Tibial artery (tissue), 4 donors: ENCODE measurements at regions of chr13 and their contacts with region 1.

Region 1: DNA sequence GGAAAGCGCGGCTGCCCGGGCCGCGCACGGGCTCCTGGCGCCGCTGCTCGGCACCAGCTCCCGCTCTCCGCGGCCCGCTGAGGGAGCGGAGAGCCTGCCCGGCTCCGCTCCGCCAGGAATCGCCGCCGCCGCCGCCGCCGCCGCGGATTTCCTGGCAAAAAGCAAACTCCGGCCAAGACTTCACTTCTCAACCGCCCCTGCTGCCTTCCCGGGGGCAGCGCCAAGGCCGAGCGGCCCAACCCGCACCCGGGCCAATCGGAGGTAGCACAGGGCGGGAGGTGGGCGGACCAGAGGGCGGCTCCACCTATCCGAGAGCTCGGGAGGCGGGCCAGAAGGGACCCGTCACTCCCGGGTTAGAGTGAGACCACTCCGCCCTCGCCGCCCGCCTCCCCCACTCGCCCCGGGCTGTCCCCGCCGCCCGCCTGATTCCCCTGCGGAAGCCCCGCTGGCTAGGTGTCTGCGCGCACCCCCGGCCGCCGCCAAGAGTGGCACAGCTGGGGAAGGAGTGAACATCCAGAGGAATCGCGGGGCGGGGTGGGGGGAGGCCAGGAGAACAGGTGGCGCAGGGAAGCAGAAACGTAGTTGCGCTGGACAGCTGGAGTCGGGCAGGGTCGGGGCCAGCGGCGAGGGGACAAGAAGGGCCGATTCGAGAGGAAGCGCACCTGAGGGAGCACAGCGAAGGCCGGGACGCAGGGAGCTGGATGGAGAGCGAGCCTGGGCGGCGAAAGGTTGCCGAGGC is at the start of gene LNX2:
- DNase-seq: peak; percentile 98 to 99
- H3K4me3 ChIP-seq: peak within 1 kb of the TSS; percentile 87 to 95
- H3K27ac ChIP-seq: peak within 1 kb of the TSS; percentile 95 to 97
- H3K4me1 ChIP-seq: peaks cover 0 to 37% (median 21%) of the 10 kb centered on the region in 4 donors
- H3K27me3 ChIP-seq: no peaks in the 10 kb centered on the region
- CTCF ChIP-seq: no peak

Region 2: GRCh38 chr13:27171827-27172494 is 448.6 kb before region 1 on chr13:
- intact Hi-C with region 1: loop called (anchors 5 kb)
- DNase-seq: peak; percentile 89 to 96
- H3K4me3 ChIP-seq: peak overlapping the region; percentile 67 to 72
- H3K27ac ChIP-seq: peak overlapping the region; percentile 86 to 90
- H3K4me1 ChIP-seq: peaks cover 0 to 33% (median 23%) of the 10 kb centered on the region in 4 donors
- H3K27me3 ChIP-seq: no peaks in the 10 kb centered on the region
- CTCF ChIP-seq: no peak

Region 3: GRCh38 chr13:27242706-27243105 is 377.8 kb before region 1 on chr13:
- intact Hi-C with region 1: loop called (anchors 10 kb)
- DNase-seq: no peak
- H3K4me3 ChIP-seq: no peak overlapping the region
- H3K27ac ChIP-seq: no peak overlapping the region
- H3K4me1 ChIP-seq: no peaks in the 10 kb centered on the region
- H3K27me3 ChIP-seq: no peaks in the 10 kb centered on the region
- CTCF ChIP-seq: no peak

Region 4: DNA sequence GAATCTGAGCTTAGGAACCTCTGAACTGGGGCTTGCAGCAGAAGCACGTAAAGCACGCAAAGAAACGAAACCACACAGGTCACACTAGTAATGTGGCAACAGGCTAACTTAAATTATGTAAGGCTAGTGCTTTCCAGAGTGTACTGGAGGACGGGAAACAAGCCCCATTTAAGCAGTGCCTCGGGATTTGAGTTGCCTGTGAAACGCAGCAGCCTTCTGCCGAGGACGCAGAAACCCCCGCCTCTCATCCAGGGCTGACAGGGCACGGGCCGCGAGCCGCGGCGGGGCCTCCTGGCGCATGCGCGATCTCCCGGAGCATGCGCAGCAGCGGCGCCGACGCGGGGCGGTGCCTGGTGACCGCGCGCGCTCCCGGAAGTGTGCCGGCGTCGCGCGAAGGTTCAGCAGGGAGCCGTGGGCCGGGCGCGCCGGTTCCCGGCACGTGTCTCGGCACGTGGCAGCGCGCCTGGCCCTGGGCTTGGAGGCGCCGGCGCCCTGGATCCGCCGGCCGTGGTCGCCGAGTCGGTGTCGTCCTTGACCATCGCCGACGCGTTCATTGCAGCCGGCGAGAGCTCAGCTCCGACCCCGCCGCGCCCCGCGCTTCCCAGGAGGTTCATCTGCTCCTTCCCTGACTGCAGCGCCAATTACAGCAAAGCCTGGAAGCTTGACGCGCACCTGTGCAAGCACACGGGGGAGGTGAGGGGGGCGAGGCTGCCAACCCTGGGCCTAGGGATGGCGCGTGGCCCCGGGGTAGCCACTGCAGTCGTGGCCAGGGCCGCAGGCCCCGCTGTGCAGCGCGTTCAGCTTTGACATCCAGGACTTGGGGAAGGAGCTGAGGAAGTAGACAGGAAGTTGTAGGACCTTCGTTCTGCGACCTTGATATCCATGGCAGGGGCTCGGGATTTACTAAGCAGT is 196.0 kb before region 1 on chr13 and contains the start of gene GTF3A:
- intact Hi-C with region 1: loop called (anchors 10 kb)
- DNase-seq: peak; percentile 79 to 92
- H3K4me3 ChIP-seq: peak within 1 kb of the TSS; percentile 81 to 92
- H3K27ac ChIP-seq: peak within 1 kb of the TSS; percentile 79 to 80
- H3K4me1 ChIP-seq: peaks cover 0 to 33% (median 24%) of the 10 kb centered on the region in 4 donors
- H3K27me3 ChIP-seq: no peaks in the 10 kb centered on the region
- CTCF ChIP-seq: no peak

Region 5: GRCh38 chr13:28138012-28138755 is 517.6 kb after region 1 on chr13 and contains the start of gene PAN3:
- intact Hi-C with region 1: loop called (anchors 10 kb)
- DNase-seq: peak; percentile 93 to 95
- H3K4me3 ChIP-seq: peak within 1 kb of the TSS; percentile 92 to 94
- H3K27ac ChIP-seq: peak within 1 kb of the TSS; percentile 96 to 98
- H3K4me1 ChIP-seq: peaks cover 0 to 40% (median 11%) of the 10 kb centered on the region in 4 donors
- H3K27me3 ChIP-seq: no peaks in the 10 kb centered on the region
- CTCF ChIP-seq: no peak